ENCODE measurements at regions of chr12 and their contacts with region 1.

Region 1: GRCh38 chr12:44947163-44947562 is 71.0 kb upstream of the NELL2 start:
- DNase-seq: no peak
- ATAC-seq: no peak
- H3K4me3 ChIP-seq: no peak overlapping the region
- H3K4me3 Mint-ChIP-seq: no peak overlapping the region
- H3K27ac ChIP-seq: no peak overlapping the region
- H3K27ac Mint-ChIP-seq: no peak overlapping the region
- H3K4me1 ChIP-seq: peaks cover 2 to 4% of the 10 kb centered on the region in 2 experiments
- H3K4me1 Mint-ChIP-seq: peaks cover 0 to 4% (median 3%) of the 10 kb centered on the region in 3 donors
- H3K27me3 ChIP-seq: peaks cover 0 to 8% of the 10 kb centered on the region in 2 experiments
- H3K27me3 Mint-ChIP-seq: peaks cover 13 to 19% of the 10 kb centered on the region in 2 donors

Region 2: GRCh38 chr12:43805860-43806736 is 1141.1 kb before region 1 on chr12 and contains the start of gene TWF1:
- CTCF ChIA-PET with region 1: no interaction called
- POLR2A ChIA-PET with region 1: no interaction called
- DNase-seq: peak; percentile 62 to 89 (median 78)
- ATAC-seq: peak; percentile 91 to 93 (median 92)
- H3K4me3 ChIP-seq: peak within 1 kb of the TSS; percentile 89 to 91
- H3K4me3 Mint-ChIP-seq: peak within 1 kb of the TSS; percentile 93 to 100 (median 100)
- H3K27ac ChIP-seq: peak within 1 kb of the TSS; percentile 91
- H3K27ac Mint-ChIP-seq: peak within 1 kb of the TSS; percentile 100
- H3K4me1 ChIP-seq: peaks cover 0 to 26% of the 10 kb centered on the region in 2 experiments
- H3K4me1 Mint-ChIP-seq: peaks cover 36 to 58% (median 44%) of the 10 kb centered on the region in 3 donors
- H3K27me3 ChIP-seq: no peaks in the 10 kb centered on the region
- H3K27me3 Mint-ChIP-seq: no peaks in the 10 kb centered on the region
- total RNA-seq, gene TWF1: 23.4 to 53.3 (median 29.4) TPM

Region 3: DNA sequence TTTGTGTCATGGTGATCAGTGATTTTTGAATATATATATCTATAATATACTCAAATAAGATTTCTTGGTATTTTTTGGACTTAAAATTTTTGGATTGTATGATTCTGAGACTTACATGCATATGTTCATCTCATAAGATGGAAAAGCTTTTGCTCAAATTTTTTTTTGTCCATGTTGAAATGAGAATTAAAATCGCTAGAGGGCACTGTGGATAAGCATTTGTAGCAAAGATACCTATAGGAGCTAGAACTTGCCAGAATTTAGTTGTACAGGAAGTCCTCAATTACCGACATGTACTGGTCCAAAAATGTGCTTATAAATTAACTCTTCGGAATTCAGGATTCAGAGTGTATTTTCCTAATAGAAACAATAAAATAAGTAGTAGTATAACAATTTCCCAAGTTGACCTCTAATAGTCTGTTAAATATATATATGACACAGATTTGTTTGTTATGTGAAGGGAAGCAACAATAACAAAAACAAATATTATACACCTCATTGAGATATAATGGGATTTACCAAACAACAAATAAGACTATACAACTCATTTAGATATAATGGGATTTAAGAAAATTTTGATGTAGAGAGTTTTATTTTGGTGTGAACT is 931.7 kb before region 1 on chr12:
- CTCF ChIA-PET with region 1: interaction called, 5 to 14 read pairs
- POLR2A ChIA-PET with region 1: no interaction called
- DNase-seq: peak in 1 of 35 experiments; percentile 64
- ATAC-seq: peak in 3 of 4 experiments; percentile 50 to 66 (median 57)
- H3K4me3 ChIP-seq: no peak overlapping the region
- H3K4me3 Mint-ChIP-seq: no peak overlapping the region
- H3K27ac ChIP-seq: no peak overlapping the region
- H3K27ac Mint-ChIP-seq: no peak overlapping the region
- H3K4me1 ChIP-seq: no peaks in the 10 kb centered on the region
- H3K4me1 Mint-ChIP-seq: peaks cover 0 to 2% (median 0%) of the 10 kb centered on the region in 3 donors
- H3K27me3 ChIP-seq: no peaks in the 10 kb centered on the region
- H3K27me3 Mint-ChIP-seq: peaks cover 0 to 4% of the 10 kb centered on the region in 2 donors